B cell (primary cell): ENCODE measurements at regions of chr5 and their contacts with region 1.

Region 1: GRCh38 chr5:154857530-154858296 is 714 bp upstream of the CNOT8 start:
- DNase-seq: peak; percentile 95
- ATAC-seq: peak; percentile 58
- H3K4me3 ChIP-seq: peak overlapping the region; percentile 79 to 100 (median 85)
- H3K4me3 Mint-ChIP-seq: peak overlapping the region; percentile 95
- H3K27ac ChIP-seq: peak overlapping the region; percentile 98 to 99
- H3K27ac Mint-ChIP-seq: peak overlapping the region; percentile 98
- H3K4me1 ChIP-seq: peaks cover 34 to 37% of the 10 kb centered on the region in 2 donors
- H3K4me1 Mint-ChIP-seq: peaks cover 39% of the 10 kb centered on the region
- H3K27me3 ChIP-seq: no peaks in the 10 kb centered on the region
- H3K27me3 Mint-ChIP-seq: no peaks in the 10 kb centered on the region
- CTCF ChIP-seq: no peak

Region 2: DNA sequence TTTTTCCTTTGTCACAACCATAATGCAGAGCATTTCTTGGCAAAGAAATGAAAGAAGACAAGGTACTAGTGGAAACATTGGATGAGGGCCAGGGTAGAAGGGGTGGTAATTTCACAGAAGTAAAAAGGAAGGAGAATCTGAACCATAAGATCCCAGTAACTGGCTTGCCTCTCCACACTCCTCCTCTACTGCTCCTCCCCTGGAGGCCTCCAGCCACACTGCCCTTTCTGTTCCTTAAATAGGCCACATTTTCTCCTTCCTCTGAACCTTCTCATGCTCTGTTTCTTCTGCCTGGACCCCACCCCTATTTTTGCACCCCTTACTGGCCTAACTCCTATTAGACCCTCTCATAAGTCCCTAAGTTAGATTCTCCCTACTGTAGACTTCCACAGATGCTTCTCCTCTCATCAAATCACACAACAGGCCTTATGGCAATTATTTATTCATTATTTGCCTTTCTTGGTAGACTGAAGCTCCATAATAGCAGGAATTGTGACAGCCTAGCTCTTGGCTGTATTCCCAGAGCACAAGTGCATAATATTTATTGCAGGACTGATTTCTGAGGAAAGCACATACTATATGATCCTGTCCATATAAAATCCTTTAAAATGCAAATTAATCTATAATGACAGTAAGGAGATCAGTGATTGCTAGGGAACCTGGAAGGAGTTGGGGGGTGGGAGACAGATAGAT is 1398.5 kb before region 1 on chr5:
- CTCF ChIA-PET with region 1: no interaction called
- POLR2A ChIA-PET with region 1: no interaction called
- intact Hi-C with region 1: no loop called
- DNase-seq: no peak
- ATAC-seq: no peak
- H3K4me3 ChIP-seq: no peak overlapping the region
- H3K4me3 Mint-ChIP-seq: no peak overlapping the region
- H3K27ac ChIP-seq: no peak overlapping the region
- H3K27ac Mint-ChIP-seq: no peak overlapping the region
- H3K4me1 ChIP-seq: no peaks in the 10 kb centered on the region
- H3K4me1 Mint-ChIP-seq: no peaks in the 10 kb centered on the region
- H3K27me3 ChIP-seq: no peaks in the 10 kb centered on the region
- H3K27me3 Mint-ChIP-seq: no peaks in the 10 kb centered on the region
- CTCF ChIP-seq: no peak

Region 3: GRCh38 chr5:154445422-154446182 is 412.1 kb before region 1 on chr5 and contains the start of gene SAP30L:
- CTCF ChIA-PET with region 1: no interaction called
- POLR2A ChIA-PET with region 1: no interaction called
- intact Hi-C with region 1: loop called (anchors 1 kb)
- DNase-seq: peak; percentile 97
- ATAC-seq: peak; percentile 96
- H3K4me3 ChIP-seq: peak within 1 kb of the TSS; percentile 78 to 99 (median 90)
- H3K4me3 Mint-ChIP-seq: peak within 1 kb of the TSS; percentile 98
- H3K27ac ChIP-seq: peak within 1 kb of the TSS; percentile 9 to 75
- H3K27ac Mint-ChIP-seq: peak within 1 kb of the TSS; percentile 93
- H3K4me1 ChIP-seq: peaks cover 24 to 32% of the 10 kb centered on the region in 2 donors
- H3K4me1 Mint-ChIP-seq: peaks cover 53% of the 10 kb centered on the region
- H3K27me3 ChIP-seq: no peaks in the 10 kb centered on the region
- H3K27me3 Mint-ChIP-seq: no peaks in the 10 kb centered on the region
- CTCF ChIP-seq: no peak
- total RNA-seq, gene SAP30L: 41.5 and 50.0 TPM in 2 replicates

Region 4: DNA sequence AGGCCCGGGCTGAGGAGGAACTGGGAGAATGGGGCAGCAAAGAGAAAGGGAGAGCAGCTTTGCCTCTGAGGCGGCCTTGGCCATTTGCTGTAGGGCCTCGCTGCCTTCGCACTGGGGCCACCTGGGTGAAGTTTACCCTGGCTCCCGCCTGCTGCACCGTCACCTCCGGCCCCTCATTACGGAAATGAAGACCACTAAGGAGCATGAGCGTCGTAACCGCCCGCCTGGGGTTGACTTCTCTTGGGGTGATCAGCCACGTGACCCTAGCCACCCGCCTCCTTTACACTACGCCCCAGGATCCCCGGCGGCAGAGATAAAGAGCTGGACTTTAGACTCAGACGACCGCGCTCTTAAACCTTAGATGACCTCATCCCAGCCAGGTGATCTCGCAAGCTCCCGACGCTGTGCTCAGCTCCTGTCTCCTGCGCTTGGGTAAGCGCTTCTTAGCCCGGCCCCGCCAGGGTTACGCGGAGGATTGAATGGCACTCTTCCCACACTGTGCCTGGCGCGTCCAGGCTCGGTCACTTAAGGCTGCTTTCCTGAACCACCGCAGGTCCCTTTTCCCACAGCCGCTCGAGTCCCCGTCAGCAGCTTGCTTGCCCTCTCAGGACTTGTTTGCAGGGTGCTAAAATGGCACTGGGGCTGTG is 210.5 kb before region 1 on chr5:
- CTCF ChIA-PET with region 1: interaction called, 3 read pairs
- POLR2A ChIA-PET with region 1: no interaction called
- intact Hi-C with region 1: loop called (anchors 2 kb)
- DNase-seq: peak; percentile 53
- ATAC-seq: peak; percentile 61
- H3K4me3 ChIP-seq: peak overlapping the region in 4 of 5 experiments; percentile 37 to 74 (median 57)
- H3K4me3 Mint-ChIP-seq: peak overlapping the region; percentile 93
- H3K27ac ChIP-seq: no peak overlapping the region
- H3K27ac Mint-ChIP-seq: peak overlapping the region; percentile 77
- H3K4me1 ChIP-seq: peaks cover 14 to 15% of the 10 kb centered on the region in 2 donors
- H3K4me1 Mint-ChIP-seq: peaks cover 15% of the 10 kb centered on the region
- H3K27me3 ChIP-seq: peaks cover 0 to 16% (median 2%) of the 10 kb centered on the region in 4 experiments
- H3K27me3 Mint-ChIP-seq: peaks cover 22% of the 10 kb centered on the region
- CTCF ChIP-seq: no peak

Region 5: GRCh38 chr5:154683101-154683880 is 174.4 kb before region 1 on chr5:
- CTCF ChIA-PET with region 1: no interaction called
- POLR2A ChIA-PET with region 1: no interaction called
- intact Hi-C with region 1: loop called (anchors 2 kb)
- DNase-seq: no peak
- ATAC-seq: peak; percentile 44
- H3K4me3 ChIP-seq: peak overlapping the region; percentile 21 to 75 (median 57)
- H3K4me3 Mint-ChIP-seq: peak overlapping the region; percentile 78
- H3K27ac ChIP-seq: peak overlapping the region in 1 of 2 donors; percentile 55
- H3K27ac Mint-ChIP-seq: peak overlapping the region; percentile 42
- H3K4me1 ChIP-seq: peaks cover 4 to 17% of the 10 kb centered on the region in 2 donors
- H3K4me1 Mint-ChIP-seq: peaks cover 4% of the 10 kb centered on the region
- H3K27me3 ChIP-seq: peaks cover 0 to 8% (median 2%) of the 10 kb centered on the region in 4 experiments
- H3K27me3 Mint-ChIP-seq: no peaks in the 10 kb centered on the region
- CTCF ChIP-seq: no peak

Region 6: DNA sequence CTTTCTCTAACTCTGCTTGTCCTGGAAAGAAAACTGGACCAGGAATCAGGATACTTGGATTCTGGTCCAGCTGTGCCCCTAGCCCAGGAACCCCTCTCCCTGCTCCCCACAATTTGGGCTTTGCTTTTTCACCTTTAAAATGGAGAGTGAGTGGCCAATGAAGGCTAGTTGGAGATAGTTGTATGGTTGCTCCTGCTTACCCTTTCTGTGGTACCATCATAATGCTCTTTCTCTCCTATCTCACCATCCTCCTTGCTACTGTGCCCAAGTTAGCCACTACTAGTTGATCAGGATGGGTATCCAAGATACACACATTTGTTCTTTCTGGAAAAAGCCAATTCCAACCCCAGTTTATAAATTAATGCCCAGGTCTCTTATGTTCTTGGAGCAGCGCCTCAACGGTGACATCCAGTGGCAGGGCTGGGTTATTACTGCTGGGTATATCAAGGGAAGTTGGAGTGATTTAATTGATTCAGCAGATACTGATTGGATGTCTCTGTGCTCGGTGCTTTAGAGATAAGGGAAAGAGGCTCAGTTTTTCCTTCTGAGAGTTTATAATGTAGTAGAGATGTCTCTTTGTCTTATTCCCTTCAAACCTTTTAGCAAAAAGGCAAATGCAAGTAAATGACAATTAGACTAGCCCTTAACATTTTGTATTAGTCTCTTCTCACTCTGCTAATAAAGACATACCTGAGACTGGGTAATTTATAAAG is 45.9 kb before region 1 on chr5:
- CTCF ChIA-PET with region 1: no interaction called
- POLR2A ChIA-PET with region 1: no interaction called
- intact Hi-C with region 1: loop called (anchors 1 kb)
- DNase-seq: peak; percentile 75
- ATAC-seq: peak; percentile 82
- H3K4me3 ChIP-seq: no peak overlapping the region
- H3K4me3 Mint-ChIP-seq: no peak overlapping the region
- H3K27ac ChIP-seq: peak overlapping the region in 1 of 2 donors; percentile 41
- H3K27ac Mint-ChIP-seq: peak overlapping the region; percentile 50
- H3K4me1 ChIP-seq: peaks cover 21 to 25% of the 10 kb centered on the region in 2 donors
- H3K4me1 Mint-ChIP-seq: peaks cover 20% of the 10 kb centered on the region
- H3K27me3 ChIP-seq: no peaks in the 10 kb centered on the region
- H3K27me3 Mint-ChIP-seq: no peaks in the 10 kb centered on the region
- CTCF ChIP-seq: peak; percentile 97

Region 7: GRCh38 chr5:154823605-154824004 is 34.1 kb before region 1 on chr5:
- CTCF ChIA-PET with region 1: no interaction called
- POLR2A ChIA-PET with region 1: no interaction called
- intact Hi-C with region 1: no loop called
- DNase-seq: no peak
- ATAC-seq: no peak
- H3K4me3 ChIP-seq: no peak overlapping the region
- H3K4me3 Mint-ChIP-seq: no peak overlapping the region
- H3K27ac ChIP-seq: no peak overlapping the region
- H3K27ac Mint-ChIP-seq: no peak overlapping the region
- H3K4me1 ChIP-seq: no peaks in the 10 kb centered on the region
- H3K4me1 Mint-ChIP-seq: no peaks in the 10 kb centered on the region
- H3K27me3 ChIP-seq: no peaks in the 10 kb centered on the region
- H3K27me3 Mint-ChIP-seq: no peaks in the 10 kb centered on the region
- CTCF ChIP-seq: no peak

Region 8: GRCh38 chr5:154940772-154941620 is 83.3 kb after region 1 on chr5 and contains the start of gene MRPL22:
- CTCF ChIA-PET with region 1: no interaction called
- POLR2A ChIA-PET with region 1: interaction called, 3 read pairs
- intact Hi-C with region 1: loop called (anchors 1 kb)
- DNase-seq: peak; percentile 97
- ATAC-seq: peak; percentile 67
- H3K4me3 ChIP-seq: peak within 1 kb of the TSS; percentile 57 to 94 (median 77)
- H3K4me3 Mint-ChIP-seq: peak within 1 kb of the TSS; percentile 99
- H3K27ac ChIP-seq: peak within 1 kb of the TSS; percentile 56 to 88
- H3K27ac Mint-ChIP-seq: peak within 1 kb of the TSS; percentile 93
- H3K4me1 ChIP-seq: peaks cover 27 to 32% of the 10 kb centered on the region in 2 donors
- H3K4me1 Mint-ChIP-seq: peaks cover 51% of the 10 kb centered on the region
- H3K27me3 ChIP-seq: no peaks in the 10 kb centered on the region
- H3K27me3 Mint-ChIP-seq: no peaks in the 10 kb centered on the region
- CTCF ChIP-seq: no peak
- total RNA-seq, gene MRPL22: 21.4 and 32.5 TPM in 2 replicates

Region 9: DNA sequence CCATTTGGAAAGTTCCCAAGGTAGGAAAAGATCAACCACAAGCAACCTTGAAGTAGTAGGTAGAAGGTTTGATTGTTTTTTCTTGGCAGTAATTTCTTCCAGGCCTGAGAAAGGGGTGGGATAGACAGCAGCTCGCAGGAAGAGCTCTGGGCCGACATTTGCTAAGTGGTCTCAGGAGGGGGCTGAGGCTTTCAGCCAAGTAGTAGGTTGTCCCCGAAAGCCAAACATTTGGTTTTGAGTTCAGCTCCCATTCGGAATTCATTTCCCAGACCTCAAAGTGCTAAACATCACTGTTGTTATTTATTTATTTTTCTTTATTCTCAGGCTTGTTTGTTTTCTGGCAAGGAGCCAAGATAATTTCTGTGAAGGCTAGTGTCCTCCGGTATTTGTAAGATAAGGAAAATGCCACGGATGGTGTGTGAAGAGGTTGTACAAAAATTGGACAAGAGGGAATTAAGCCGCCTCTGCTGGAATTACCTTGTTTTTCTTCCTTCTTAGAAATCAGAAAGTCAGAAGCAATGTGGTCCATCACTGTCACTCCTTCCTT is 267.9 kb after region 1 on chr5:
- CTCF ChIA-PET with region 1: no interaction called
- POLR2A ChIA-PET with region 1: no interaction called
- intact Hi-C with region 1: no loop called
- DNase-seq: no peak
- ATAC-seq: no peak
- H3K4me3 ChIP-seq: no peak overlapping the region
- H3K4me3 Mint-ChIP-seq: no peak overlapping the region
- H3K27ac ChIP-seq: no peak overlapping the region
- H3K27ac Mint-ChIP-seq: no peak overlapping the region
- H3K4me1 ChIP-seq: no peaks in the 10 kb centered on the region
- H3K4me1 Mint-ChIP-seq: no peaks in the 10 kb centered on the region
- H3K27me3 ChIP-seq: no peaks in the 10 kb centered on the region
- H3K27me3 Mint-ChIP-seq: peaks cover 14% of the 10 kb centered on the region
- CTCF ChIP-seq: no peak